CD4-positive, alpha-beta memory T cell (primary cell): ENCODE measurements at regions of chr1 and their contacts with region 1.

Region 1: GRCh38 chr1:114716304-114717170 is at the start of gene NRAS:
- DNase-seq: peak; percentile 93 to 96 (median 94)
- H3K4me3 ChIP-seq: peak within 1 kb of the TSS; percentile 83 to 90
- H3K4me3 Mint-ChIP-seq: peak within 1 kb of the TSS; percentile 94 to 99 (median 98)
- H3K27ac ChIP-seq: peak within 1 kb of the TSS; percentile 97
- H3K27ac Mint-ChIP-seq: peak within 1 kb of the TSS; percentile 99 to 100 (median 100)
- H3K4me1 ChIP-seq: peaks cover 21% of the 10 kb centered on the region
- H3K4me1 Mint-ChIP-seq: peaks cover 10 to 25% (median 19%) of the 10 kb centered on the region in 4 donors
- H3K27me3 ChIP-seq: no peaks in the 10 kb centered on the region
- H3K27me3 Mint-ChIP-seq: no peaks in the 10 kb centered on the region
- total RNA-seq, gene NRAS: 22.0 to 22.3 TPM

Region 2: DNA sequence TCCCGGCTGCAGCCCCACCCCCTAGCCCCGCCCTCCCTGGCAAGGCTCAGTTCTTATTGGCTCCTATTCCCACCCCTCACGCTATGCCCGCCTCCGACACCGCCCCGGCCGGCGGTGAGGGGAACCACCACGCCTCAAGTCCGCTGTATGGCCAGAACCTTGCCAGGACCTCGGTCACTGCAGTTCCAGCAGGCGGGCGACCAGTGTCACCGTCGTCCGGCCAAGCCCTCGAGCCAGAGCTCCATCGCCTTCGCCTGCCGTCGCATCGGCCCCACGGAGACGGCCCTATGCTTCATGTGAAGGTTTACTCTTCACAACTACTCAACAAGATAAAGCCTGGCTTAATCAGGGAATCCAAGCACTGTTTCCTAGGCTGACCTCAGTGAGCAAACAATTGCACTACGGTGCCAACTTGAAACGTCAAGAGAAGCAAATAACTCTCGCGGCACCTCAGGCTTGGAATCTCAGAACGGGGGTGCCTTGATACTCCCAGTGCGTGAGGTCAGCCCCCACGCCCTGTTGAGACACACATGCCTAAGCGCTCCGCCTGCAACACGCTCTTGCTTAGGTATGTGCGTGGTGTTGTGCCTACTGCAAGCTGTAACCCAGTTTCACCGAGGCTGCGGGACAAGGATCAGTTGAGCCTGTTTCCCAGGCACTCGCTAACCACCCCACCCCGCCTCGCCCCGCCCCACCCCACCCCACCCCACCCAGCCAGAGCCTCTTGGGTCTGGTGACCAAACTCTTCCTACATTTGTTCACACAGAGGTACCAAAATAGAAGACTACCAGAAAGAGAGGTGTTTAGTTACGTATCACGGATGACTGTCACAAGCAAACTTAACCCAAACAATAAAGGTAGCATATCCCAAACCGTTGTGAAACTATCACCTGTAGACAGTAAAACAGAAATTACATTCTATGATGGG is 46.2 kb before region 1 on chr1:
- CTCF ChIA-PET with region 1: no interaction called
- POLR2A ChIA-PET with region 1: interaction called, 8 read pairs
- intact Hi-C with region 1: loop called (anchors 2 kb)
- DNase-seq: peak; percentile 76 to 87 (median 78)
- H3K4me3 ChIP-seq: peak overlapping the region; percentile 25 to 76
- H3K4me3 Mint-ChIP-seq: peak overlapping the region; percentile 94 to 98 (median 96)
- H3K27ac ChIP-seq: peak overlapping the region; percentile 49
- H3K27ac Mint-ChIP-seq: peak overlapping the region; percentile 81 to 95 (median 91)
- H3K4me1 ChIP-seq: peaks cover 7% of the 10 kb centered on the region
- H3K4me1 Mint-ChIP-seq: peaks cover 6 to 14% (median 10%) of the 10 kb centered on the region in 4 donors
- H3K27me3 ChIP-seq: no peaks in the 10 kb centered on the region
- H3K27me3 Mint-ChIP-seq: peaks cover 5 to 7% of the 10 kb centered on the region in 2 donors

Region 3: GRCh38 chr1:114757455-114758250 is 41.1 kb after region 1 on chr1 and contains the start of gene CSDE1:
- CTCF ChIA-PET with region 1: no interaction called
- POLR2A ChIA-PET with region 1: interaction called, 31 read pairs
- intact Hi-C with region 1: loop called (anchors 1 kb)
- DNase-seq: peak; percentile 96 to 98 (median 97)
- H3K4me3 ChIP-seq: peak within 1 kb of the TSS; percentile 97 to 99
- H3K4me3 Mint-ChIP-seq: peak within 1 kb of the TSS; percentile 97 to 100 (median 100)
- H3K27ac ChIP-seq: peak within 1 kb of the TSS; percentile 100
- H3K27ac Mint-ChIP-seq: peak within 1 kb of the TSS; percentile 100
- H3K4me1 ChIP-seq: peaks cover 52% of the 10 kb centered on the region
- H3K4me1 Mint-ChIP-seq: peaks cover 43 to 62% (median 49%) of the 10 kb centered on the region in 4 donors
- H3K27me3 ChIP-seq: no peaks in the 10 kb centered on the region
- H3K27me3 Mint-ChIP-seq: no peaks in the 10 kb centered on the region
- total RNA-seq, gene CSDE1: 530 to 559 TPM

Region 4: DNA sequence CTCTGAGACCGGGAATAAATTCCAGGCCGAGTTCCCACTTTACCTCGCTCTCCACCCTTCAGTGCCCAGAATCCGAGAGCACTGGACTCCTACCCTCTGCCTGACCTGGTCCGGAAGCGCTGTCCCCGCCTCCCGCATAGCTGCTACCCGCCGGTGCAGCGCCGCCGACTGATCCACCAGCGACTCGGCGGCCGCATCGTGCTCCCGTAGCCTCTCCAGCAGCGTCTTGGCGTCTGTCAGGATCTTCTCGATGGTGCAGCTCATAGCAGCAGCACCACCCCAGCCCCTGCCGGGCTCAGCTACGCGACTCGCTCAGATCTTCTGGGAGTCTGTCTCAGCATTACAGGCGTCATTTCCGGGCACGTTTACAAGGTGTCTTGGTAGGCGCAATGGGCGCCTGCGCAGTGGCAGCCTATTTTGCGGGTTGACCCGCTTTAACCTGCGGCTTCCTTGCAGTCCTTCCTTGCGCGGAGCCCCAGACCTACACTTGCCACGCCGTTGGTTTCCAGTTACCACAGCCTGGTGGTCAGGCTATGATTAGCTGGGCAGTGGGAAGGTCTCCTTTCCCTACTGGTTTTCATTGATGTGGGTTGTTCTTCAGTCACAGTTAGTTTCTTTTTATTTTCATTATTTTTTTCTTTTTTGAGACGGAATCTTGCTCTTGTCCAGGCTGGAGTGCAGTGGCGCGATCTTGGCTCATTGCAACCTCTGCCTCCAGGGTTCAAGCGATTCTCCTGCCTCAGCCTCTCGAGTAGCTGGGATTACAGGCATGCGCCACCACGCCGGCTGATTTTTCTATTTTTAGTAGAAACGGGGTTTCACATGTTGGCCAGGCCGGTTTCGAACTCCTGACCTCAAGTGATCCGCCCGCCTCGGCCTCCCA is 64.0 kb after region 1 on chr1 and contains the start of gene SIKE1:
- CTCF ChIA-PET with region 1: interaction called, 3 read pairs
- POLR2A ChIA-PET with region 1: interaction called, 23 read pairs
- intact Hi-C with region 1: loop called (anchors 1 kb)
- DNase-seq: peak; percentile 93 to 98 (median 96)
- H3K4me3 ChIP-seq: peak within 1 kb of the TSS; percentile 77 to 83
- H3K4me3 Mint-ChIP-seq: peak within 1 kb of the TSS; percentile 95 to 100 (median 100)
- H3K27ac ChIP-seq: peak within 1 kb of the TSS; percentile 97
- H3K27ac Mint-ChIP-seq: peak within 1 kb of the TSS; percentile 93 to 100 (median 100)
- H3K4me1 ChIP-seq: peaks cover 18% of the 10 kb centered on the region
- H3K4me1 Mint-ChIP-seq: peaks cover 14 to 36% (median 26%) of the 10 kb centered on the region in 4 donors
- H3K27me3 ChIP-seq: no peaks in the 10 kb centered on the region
- H3K27me3 Mint-ChIP-seq: no peaks in the 10 kb centered on the region
- total RNA-seq, gene SIKE1: 66.6 to 67.1 TPM

Region 5: GRCh38 chr1:115012006-115012405 is 295.5 kb after region 1 on chr1:
- CTCF ChIA-PET with region 1: no interaction called
- POLR2A ChIA-PET with region 1: no interaction called
- intact Hi-C with region 1: no loop called
- DNase-seq: no peak
- H3K4me3 ChIP-seq: no peak overlapping the region
- H3K4me3 Mint-ChIP-seq: no peak overlapping the region
- H3K27ac ChIP-seq: no peak overlapping the region
- H3K27ac Mint-ChIP-seq: no peak overlapping the region
- H3K4me1 ChIP-seq: no peaks in the 10 kb centered on the region
- H3K4me1 Mint-ChIP-seq: no peaks in the 10 kb centered on the region
- H3K27me3 ChIP-seq: no peaks in the 10 kb centered on the region
- H3K27me3 Mint-ChIP-seq: peaks cover 1 to 7% of the 10 kb centered on the region in 2 donors

Region 6: GRCh38 chr1:115062542-115063011 is 346.0 kb after region 1 on chr1:
- CTCF ChIA-PET with region 1: no interaction called
- POLR2A ChIA-PET with region 1: no interaction called
- intact Hi-C with region 1: no loop called
- DNase-seq: peak; percentile 95 to 99 (median 97)
- H3K4me3 ChIP-seq: peak overlapping the region in 1 of 2 donors; percentile 33
- H3K4me3 Mint-ChIP-seq: peak overlapping the region; percentile 77 to 91 (median 84)
- H3K27ac ChIP-seq: peak overlapping the region; percentile 79
- H3K27ac Mint-ChIP-seq: peak overlapping the region; percentile 98 to 100 (median 100)
- H3K4me1 ChIP-seq: peaks cover 44% of the 10 kb centered on the region
- H3K4me1 Mint-ChIP-seq: peaks cover 43 to 57% (median 49%) of the 10 kb centered on the region in 4 donors
- H3K27me3 ChIP-seq: no peaks in the 10 kb centered on the region
- H3K27me3 Mint-ChIP-seq: no peaks in the 10 kb centered on the region